ENCODE measurements at regions of chr11 and their contacts with region 1.

Region 1: DNA sequence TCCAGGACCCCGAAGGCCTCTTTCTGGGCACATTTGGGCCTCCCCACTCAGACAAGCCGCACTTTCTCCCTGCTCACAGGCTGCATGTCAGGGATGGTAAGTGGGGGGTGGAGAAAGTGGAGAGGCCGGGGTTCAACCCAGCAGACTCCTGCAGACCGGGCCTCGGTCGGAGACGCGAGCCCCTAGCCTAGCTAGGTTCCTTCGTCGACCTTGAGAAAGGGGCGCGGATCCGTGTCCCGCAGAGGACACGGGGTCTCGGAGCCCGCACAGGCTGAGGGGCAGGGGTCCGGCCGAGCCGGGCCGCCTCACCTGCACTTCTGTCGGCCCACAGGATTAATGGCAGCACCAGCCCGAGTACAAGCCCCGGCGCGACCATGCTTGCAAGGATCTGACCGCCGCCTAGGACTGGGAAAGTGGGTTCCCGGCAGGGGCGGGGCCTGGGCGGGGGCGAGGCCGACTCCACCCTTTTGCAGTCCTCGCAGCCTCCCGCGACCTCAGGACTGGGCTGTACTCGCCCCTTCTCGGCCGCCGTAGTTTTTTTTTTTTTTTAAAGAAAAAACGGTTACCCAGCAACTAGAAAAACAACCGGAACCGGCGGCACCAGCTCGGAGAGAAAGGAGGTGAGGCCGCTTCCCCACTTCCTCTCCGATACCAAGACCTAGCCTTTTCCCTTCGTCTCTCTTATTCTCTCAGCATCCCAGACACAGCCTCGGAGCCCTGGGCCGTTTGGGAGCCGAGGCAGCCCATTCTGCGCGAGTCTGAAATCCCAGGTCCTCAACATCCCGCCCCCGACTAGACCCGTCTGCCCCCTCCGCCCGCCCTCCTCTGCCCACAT is at the starts of genes SIAE and SPA17:
- DNase-seq: peak; percentile 93
- H3K4me3 ChIP-seq: peak within 1 kb of the TSS; percentile 79
- H3K27ac ChIP-seq: peak within 1 kb of the TSS; percentile 30
- H3K4me1 ChIP-seq: peaks cover 45% of the 10 kb centered on the region
- CTCF ChIP-seq: no peak
- total RNA-seq, gene SIAE: 2.6 and 4.8 TPM in 2 replicates
- total RNA-seq, gene SPA17: 2.4 and 5.1 TPM in 2 replicates

Region 2: GRCh38 chr11:124746621-124747243 is 73.2 kb after region 1 on chr11:
- CTCF ChIA-PET with region 1: interaction called, 5 read pairs
- POLR2A ChIA-PET with region 1: interaction called, 9 read pairs
- intact Hi-C with region 1: loop called (anchors 1 kb)
- DNase-seq: peak; percentile 90
- H3K4me3 ChIP-seq: peak overlapping the region; percentile 70
- H3K27ac ChIP-seq: peak overlapping the region; percentile 61
- H3K4me1 ChIP-seq: peaks cover 23% of the 10 kb centered on the region
- CTCF ChIP-seq: peak; percentile 84

Region 3: DNA sequence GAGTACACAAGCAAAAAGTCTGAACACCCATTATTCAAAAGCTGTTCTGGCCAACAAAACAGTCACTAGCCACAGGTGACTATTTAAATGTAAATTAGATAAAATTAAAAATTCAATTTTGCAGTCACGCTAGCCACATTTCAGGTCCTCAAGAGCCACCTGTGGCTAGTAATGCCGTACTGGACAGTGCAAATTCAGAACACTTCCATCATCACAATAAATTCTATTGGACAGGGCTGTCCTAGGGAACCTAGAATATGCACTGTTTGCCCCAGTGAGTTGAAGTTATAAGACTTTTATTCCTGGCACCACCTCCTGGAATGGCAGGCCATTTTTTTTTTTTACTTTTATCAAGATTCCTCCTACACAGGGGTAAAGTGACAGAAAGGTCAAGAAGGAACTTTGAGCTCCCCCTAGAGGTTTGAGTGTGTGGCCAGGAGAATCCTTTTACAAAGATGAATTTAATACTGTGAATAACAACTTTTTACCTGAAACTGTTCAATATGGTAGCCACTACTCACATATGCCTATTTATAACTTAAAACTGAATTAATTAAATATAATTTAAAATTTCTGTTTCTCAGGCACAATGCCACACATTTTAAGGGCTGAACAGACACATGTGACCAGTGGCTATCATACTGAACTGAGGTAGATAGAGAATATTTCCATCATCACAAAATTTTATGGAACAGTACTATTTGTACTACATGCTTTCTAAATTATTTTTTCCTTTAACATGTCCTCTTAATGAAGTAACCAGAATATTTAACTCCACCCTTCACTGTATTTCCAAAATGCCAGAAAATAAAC is 120.1 kb after region 1 on chr11:
- CTCF ChIA-PET with region 1: interaction called, 3 read pairs
- POLR2A ChIA-PET with region 1: interaction called, 5 read pairs
- intact Hi-C with region 1: loop called (anchors 1 kb)
- DNase-seq: peak; percentile 72
- H3K4me3 ChIP-seq: no peak overlapping the region
- H3K27ac ChIP-seq: no peak overlapping the region
- H3K4me1 ChIP-seq: peaks cover 32% of the 10 kb centered on the region
- CTCF ChIP-seq: peak; percentile 95

Measured in OCI-LY7 (cell line).